ENCODE measurements at regions of chr21 and their contacts with region 1.

Region 1: GRCh38 chr21:16838331-16838730 is 674.5 kb upstream of the CXADR start:
- DNase-seq: no peak
- H3K4me3 ChIP-seq: no peak overlapping the region
- H3K27ac ChIP-seq: no peak overlapping the region
- H3K4me1 ChIP-seq: no peaks in the 10 kb centered on the region
- H3K27me3 ChIP-seq: no peaks in the 10 kb centered on the region
- CTCF ChIP-seq: no peak
- EP300 ChIP-seq: no peak
- POLR2A ChIP-seq: no peak

Region 2: DNA sequence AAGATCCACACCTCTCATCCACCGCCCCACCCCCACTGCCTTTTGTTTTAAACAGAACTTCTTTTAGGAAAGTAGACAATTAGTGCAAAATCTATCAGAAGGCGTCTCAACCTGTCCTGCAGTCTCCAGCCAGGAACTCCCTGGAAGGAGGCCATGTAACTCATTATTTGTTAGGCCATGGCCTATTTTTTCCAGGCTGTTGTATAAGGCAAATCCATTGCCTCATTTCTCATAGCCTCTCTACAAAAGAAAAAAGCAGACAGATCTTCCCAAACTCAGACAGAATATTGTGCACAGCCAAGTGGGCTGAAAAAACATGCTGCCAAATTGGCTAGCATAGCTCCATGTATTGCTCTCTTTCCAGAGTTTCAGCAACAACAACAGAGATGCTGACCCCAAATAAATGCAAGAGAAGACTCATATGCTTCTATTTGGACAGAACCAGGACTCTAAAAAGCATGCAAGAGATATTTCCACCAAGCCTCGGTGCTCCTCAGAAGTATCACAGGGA is 96.1 kb before region 1 on chr21:
- in situ Hi-C with region 1: loop called in 1 of 4 experiments (anchors 25 kb)
- intact Hi-C with region 1: no loop called
- DNase-seq: no peak
- H3K4me3 ChIP-seq: no peak overlapping the region
- H3K27ac ChIP-seq: peak overlapping the region in 1 of 4 donors; percentile 28
- H3K4me1 ChIP-seq: peaks cover 0 to 5% (median 0%) of the 10 kb centered on the region in 4 donors
- H3K27me3 ChIP-seq: no peaks in the 10 kb centered on the region
- CTCF ChIP-seq: no peak
- EP300 ChIP-seq: no peak
- POLR2A ChIP-seq: no peak